ENCODE measurements at regions of chr5 and their contacts with region 1.

Region 1: DNA sequence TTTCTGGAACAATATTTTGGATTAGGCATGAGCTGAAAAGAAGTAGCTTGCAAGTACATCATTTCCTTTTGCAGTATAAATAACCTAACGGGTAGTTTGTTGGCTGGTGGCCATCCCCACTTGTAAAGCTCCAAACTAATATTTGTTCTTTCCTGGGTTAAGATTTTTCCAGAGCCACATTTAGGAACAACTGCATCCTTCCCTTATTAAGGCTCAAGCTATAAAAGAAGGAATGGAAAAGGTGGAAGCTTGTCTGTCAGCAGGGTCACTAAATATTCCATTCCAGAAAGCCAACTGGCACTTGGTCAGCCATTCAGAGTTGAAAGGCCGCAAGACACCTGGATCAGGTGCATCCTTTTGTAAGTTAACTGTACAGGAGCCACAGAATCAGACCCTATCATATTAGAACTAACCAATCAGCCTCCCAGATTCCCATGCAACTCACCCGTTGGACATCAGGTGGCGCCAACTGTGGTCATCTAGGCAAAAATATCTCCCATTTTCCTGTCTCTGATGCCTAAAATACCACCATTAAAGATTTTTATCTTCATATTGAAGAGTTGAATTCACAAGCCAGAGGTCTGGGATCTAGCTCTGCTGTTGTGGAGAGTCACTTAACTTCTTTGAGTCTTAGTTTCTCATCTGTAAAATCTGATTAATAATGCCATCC is 82.9 kb downstream of the PTCD2 start:
- DNase-seq: no peak
- ATAC-seq: peak; percentile 71
- H3K4me3 ChIP-seq: no peak overlapping the region
- H3K27ac ChIP-seq: no peak overlapping the region
- H3K4me1 ChIP-seq: no peaks in the 10 kb centered on the region
- H3K27me3 ChIP-seq: no peaks in the 10 kb centered on the region
- CTCF ChIP-seq: peak; percentile 4 to 67 (median 61); a peak in 4 of 6 replicates
- POLR2A ChIP-seq: no peak
- RAD21 ChIP-seq: peak; percentile 24; the same call in 1 of the 2 replicates

Region 2: GRCh38 chr5:72523960-72524582 is 121.0 kb after region 1 on chr5:
- CTCF ChIA-PET with region 1: interaction called, 3 read pairs
- POLR2A ChIA-PET with region 1: no interaction called
- RAD21 ChIA-PET with region 1: no interaction called
- intact Hi-C with region 1: loop called (anchors 1 kb)
- DNase-seq: peak; percentile 67
- ATAC-seq: peak; percentile 82
- H3K4me3 ChIP-seq: no peak overlapping the region
- H3K27ac ChIP-seq: no peak overlapping the region
- H3K4me1 ChIP-seq: no peaks in the 10 kb centered on the region
- H3K27me3 ChIP-seq: no peaks in the 10 kb centered on the region
- CTCF ChIP-seq: peak; percentile 44 to 71 (median 61); a peak in 5 of 6 replicates
- POLR2A ChIP-seq: no peak
- RAD21 ChIP-seq: peak; percentile 87